ENCODE measurements at regions of chr15 and their contacts with region 1.

Region 1: GRCh38 chr15:89299896-89300295 is 34.7 kb downstream of the POLG start:
- H3K4me3 Mint-ChIP-seq: no peak overlapping the region
- H3K27ac Mint-ChIP-seq: no peak overlapping the region
- H3K4me1 Mint-ChIP-seq: no peaks in the 10 kb centered on the region
- H3K27me3 Mint-ChIP-seq: no peaks in the 10 kb centered on the region

Region 2: GRCh38 chr15:89206908-89207331 is 93.0 kb before region 1 on chr15:
- intact Hi-C with region 1: loop called (anchors 5 kb)
- H3K4me3 Mint-ChIP-seq: no peak overlapping the region
- H3K27ac Mint-ChIP-seq: no peak overlapping the region
- H3K4me1 Mint-ChIP-seq: peaks cover 13% of the 10 kb centered on the region
- H3K27me3 Mint-ChIP-seq: peaks cover 2% of the 10 kb centered on the region

Region 3: GRCh38 chr15:89462331-89462912 is 162.5 kb after region 1 on chr15:
- intact Hi-C with region 1: no loop called
- H3K4me3 Mint-ChIP-seq: no peak overlapping the region
- H3K27ac Mint-ChIP-seq: no peak overlapping the region
- H3K4me1 Mint-ChIP-seq: no peaks in the 10 kb centered on the region
- H3K27me3 Mint-ChIP-seq: peaks cover 16% of the 10 kb centered on the region

Measured in dendritic cell treated with granulocyte-macrophage colony-stimulating factor and Interleukin-4, amounts not matched to agents 40 ng/mL and 50 ng/mL, for 4 days (primary cell).